CD4-positive, alpha-beta T cell (primary cell): ENCODE measurements at regions of chr6 and their contacts with region 1.

Region 1: DNA sequence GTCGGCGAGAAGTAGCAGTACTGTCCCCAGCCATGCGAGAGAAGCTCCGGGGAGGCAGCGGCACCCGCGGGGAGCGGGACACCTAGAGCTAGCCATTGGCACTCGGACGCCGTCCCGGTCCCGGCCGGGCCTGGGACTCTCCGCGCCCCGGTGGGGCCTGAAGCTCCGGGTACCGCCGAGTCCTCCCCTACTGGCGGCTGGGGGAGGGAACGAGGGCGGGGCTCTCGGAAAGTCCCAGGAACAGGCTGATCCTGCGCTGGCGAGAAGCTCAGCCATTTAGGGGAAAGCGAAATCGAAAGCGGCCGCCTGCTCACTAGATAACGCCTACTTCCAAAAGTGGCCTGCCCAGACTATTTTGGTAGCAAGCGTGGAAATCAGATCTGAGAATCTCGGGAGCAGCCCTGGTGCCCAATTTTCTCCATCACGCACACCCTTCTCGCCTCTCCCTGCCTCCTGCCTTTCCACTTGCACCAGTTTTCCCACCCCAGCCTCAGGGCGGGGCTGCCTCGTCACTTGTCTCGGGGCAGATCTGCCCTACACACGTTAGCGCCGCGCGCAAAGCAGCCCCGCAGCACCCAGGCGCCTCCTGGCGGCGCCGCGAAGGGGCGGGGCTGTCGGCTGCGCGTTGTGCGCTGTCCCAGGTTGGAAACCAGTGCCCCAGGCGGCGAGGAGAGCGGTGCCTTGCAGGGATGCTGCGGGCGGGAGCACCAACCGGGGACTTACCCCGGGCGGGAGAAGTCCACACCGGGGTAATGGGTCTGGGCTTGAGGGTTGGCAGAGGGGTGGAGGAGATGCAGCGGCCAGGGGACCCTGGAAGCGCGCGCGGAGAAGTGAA is at the starts of genes PSMB9 and TAP1:
- DNase-seq: peak; percentile 88 to 98 (median 94)
- ATAC-seq: peak; percentile 81
- H3K4me3 ChIP-seq: peak within 1 kb of the TSS; percentile 94
- H3K4me3 Mint-ChIP-seq: peak within 1 kb of the TSS; percentile 98
- H3K27ac ChIP-seq: peak within 1 kb of the TSS; percentile 98 to 100
- H3K27ac Mint-ChIP-seq: peak within 1 kb of the TSS; percentile 99
- H3K4me1 ChIP-seq: peaks cover 77% of the 10 kb centered on the region
- H3K4me1 Mint-ChIP-seq: peaks cover 86% of the 10 kb centered on the region
- H3K27me3 ChIP-seq: no peaks in the 10 kb centered on the region
- H3K27me3 Mint-ChIP-seq: no peaks in the 10 kb centered on the region
- CTCF ChIP-seq: peak; percentile 97
- total RNA-seq, gene PSMB9: 37.2 to 38.4 TPM
- total RNA-seq, gene TAP1: 91.5 to 93.9 TPM

Region 2: DNA sequence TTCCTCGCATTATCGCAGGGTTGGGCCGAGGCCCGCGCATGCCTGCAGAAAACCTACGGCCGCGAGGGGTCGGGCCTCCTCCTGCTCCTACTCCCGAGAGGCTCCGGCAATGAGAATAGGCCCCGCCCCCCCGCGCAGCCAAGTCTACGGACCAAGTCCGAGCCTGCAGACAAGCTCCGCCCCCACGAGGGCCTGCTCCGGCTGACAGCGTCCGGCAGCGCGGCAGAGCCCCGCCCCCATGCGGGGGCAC is 658.2 kb before region 1 on chr6:
- CTCF ChIA-PET with region 1: no interaction called
- POLR2A ChIA-PET with region 1: interaction called, 5 read pairs
- intact Hi-C with region 1: loop called in 1 of 2 experiments (anchors 5 kb)
- DNase-seq: peak in 13 of 14 experiments; percentile 97 to 100 (median 100)
- ATAC-seq: peak; percentile 82
- H3K4me3 ChIP-seq: peak overlapping the region; percentile 100
- H3K4me3 Mint-ChIP-seq: peak overlapping the region; percentile 99
- H3K27ac ChIP-seq: peak overlapping the region; percentile 87 to 100
- H3K27ac Mint-ChIP-seq: peak overlapping the region; percentile 96
- H3K4me1 ChIP-seq: peaks cover 52% of the 10 kb centered on the region
- H3K4me1 Mint-ChIP-seq: peaks cover 48% of the 10 kb centered on the region
- H3K27me3 ChIP-seq: no peaks in the 10 kb centered on the region
- H3K27me3 Mint-ChIP-seq: no peaks in the 10 kb centered on the region
- CTCF ChIP-seq: peak; percentile 31

Region 3: GRCh38 chr6:33112148-33112547 is 258.4 kb after region 1 on chr6:
- CTCF ChIA-PET with region 1: no interaction called
- POLR2A ChIA-PET with region 1: no interaction called
- intact Hi-C with region 1: no loop called
- DNase-seq: peak in 4 of 14 experiments; percentile 21 to 75 (median 70)
- ATAC-seq: peak; percentile 98
- H3K4me3 ChIP-seq: no peak overlapping the region
- H3K4me3 Mint-ChIP-seq: no peak overlapping the region
- H3K27ac ChIP-seq: no peak overlapping the region
- H3K27ac Mint-ChIP-seq: no peak overlapping the region
- H3K4me1 ChIP-seq: peaks cover 16% of the 10 kb centered on the region
- H3K4me1 Mint-ChIP-seq: peaks cover 6% of the 10 kb centered on the region
- H3K27me3 ChIP-seq: peaks cover 42 to 43% of the 10 kb centered on the region in 2 experiments
- H3K27me3 Mint-ChIP-seq: peaks cover 94% of the 10 kb centered on the region
- CTCF ChIP-seq: no peak